SK-N-SH (cell line): ENCODE measurements at regions of chr6 and their contacts with region 1.

Region 1: GRCh38 chr6:40425192-40425919 is 161.8 kb downstream of the LRFN2 start:
- DNase-seq: peak; percentile 80
- H3K4me3 ChIP-seq: no peak overlapping the region
- H3K27ac ChIP-seq: peak overlapping the region in 1 of 2 experiments; percentile 99; a peak in 2 of 4 replicates
- H3K4me1 ChIP-seq: peaks cover 0 to 60% of the 10 kb centered on the region in 2 experiments; a peak in 2 of 4 replicates
- H3K27me3 ChIP-seq: no peaks in the 10 kb centered on the region
- CTCF ChIP-seq: no peak
- EP300 ChIP-seq: peak in 1 of 2 experiments; percentile 93; a peak in 2 of 4 replicates
- RAD21 ChIP-seq: peak; percentile 34

Region 2: GRCh38 chr6:40315060-40315459 is 110.3 kb before region 1 on chr6:
- CTCF ChIA-PET with region 1: no interaction called
- POLR2A ChIA-PET with region 1: no interaction called
- DNase-seq: no peak
- H3K4me3 ChIP-seq: no peak overlapping the region
- H3K27ac ChIP-seq: no peak overlapping the region
- H3K4me1 ChIP-seq: peaks cover 0 to 12% of the 10 kb centered on the region in 2 experiments; a peak in 1 of 4 replicates
- H3K27me3 ChIP-seq: no peaks in the 10 kb centered on the region
- CTCF ChIP-seq: no peak
- EP300 ChIP-seq: no peak
- RAD21 ChIP-seq: no peak

Region 3: DNA sequence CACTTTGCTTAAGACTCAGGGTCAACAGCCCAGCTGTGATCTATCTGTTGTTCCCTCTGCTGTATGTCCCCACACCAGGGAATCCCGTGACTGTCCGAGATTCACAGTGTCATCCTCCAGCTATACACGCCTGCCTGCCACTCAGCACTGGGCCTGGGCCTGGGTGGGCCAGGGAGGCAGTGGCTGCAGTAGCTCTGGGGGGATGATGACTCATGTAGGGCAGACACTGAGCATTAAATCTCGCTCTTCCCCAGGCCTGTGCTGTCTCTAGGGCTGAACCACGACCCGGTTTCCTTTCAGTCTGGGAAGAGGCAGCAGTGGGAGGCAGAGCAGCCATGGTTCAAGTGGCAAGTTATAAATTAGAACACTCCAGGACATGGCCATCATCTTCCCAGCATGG is 12.1 kb before region 1 on chr6:
- CTCF ChIA-PET with region 1: interaction called, 25 read pairs
- POLR2A ChIA-PET with region 1: interaction called, 11 read pairs
- DNase-seq: no peak
- H3K4me3 ChIP-seq: no peak overlapping the region
- H3K27ac ChIP-seq: peak overlapping the region in 1 of 2 experiments; percentile 100; a peak in 2 of 4 replicates
- H3K4me1 ChIP-seq: peaks cover 0 to 75% of the 10 kb centered on the region in 2 experiments; a peak in 3 of 4 replicates
- H3K27me3 ChIP-seq: no peaks in the 10 kb centered on the region
- CTCF ChIP-seq: no peak
- EP300 ChIP-seq: no peak
- RAD21 ChIP-seq: no peak

Region 4: DNA sequence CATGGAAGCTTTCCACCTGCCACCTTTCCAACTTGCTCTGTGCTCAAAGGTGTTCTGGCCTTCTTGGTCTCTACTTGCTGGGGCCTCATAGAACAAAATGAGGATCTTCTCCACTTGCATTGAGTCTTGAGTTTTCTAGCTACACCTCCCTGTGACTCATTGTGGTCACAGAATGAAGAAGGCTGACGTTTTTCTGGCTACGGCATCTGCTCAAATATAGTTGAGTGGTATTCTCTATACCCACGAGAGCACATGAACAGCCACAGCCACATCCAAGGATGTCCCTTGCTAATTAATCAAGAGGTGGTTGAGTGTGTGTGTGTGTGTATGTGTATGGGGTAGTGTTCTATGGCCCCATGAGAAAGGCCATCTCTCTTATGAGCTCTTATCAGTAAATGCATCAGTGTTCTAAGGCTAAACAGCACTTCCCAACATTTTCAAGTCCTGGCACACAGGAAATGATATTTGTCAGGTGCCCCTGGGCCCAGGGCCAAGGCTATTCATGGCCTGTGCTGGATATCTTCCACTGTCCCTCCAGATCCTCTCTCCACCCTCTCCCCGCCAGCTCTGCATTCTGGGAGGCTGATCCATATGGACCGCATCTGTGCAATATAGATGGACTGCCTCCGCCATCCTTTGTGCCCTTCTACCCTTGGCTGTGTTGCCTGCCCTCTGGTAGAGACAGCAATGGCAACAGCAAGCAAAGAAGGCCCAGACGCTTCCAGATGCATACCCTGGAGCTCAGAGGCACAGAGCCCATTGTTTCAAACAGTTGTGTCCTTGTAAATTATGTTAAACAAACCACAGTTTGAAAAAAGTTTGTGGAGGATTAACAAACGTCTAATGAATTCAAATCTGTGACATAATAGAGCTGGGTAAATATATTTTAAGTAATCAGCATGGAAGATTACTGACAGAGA is 11.6 kb after region 1 on chr6:
- CTCF ChIA-PET with region 1: interaction called, 13 read pairs
- POLR2A ChIA-PET with region 1: interaction called, 13 read pairs
- DNase-seq: peak; percentile 66
- H3K4me3 ChIP-seq: no peak overlapping the region
- H3K27ac ChIP-seq: peak overlapping the region in 1 of 2 experiments; percentile 94; a peak in 2 of 4 replicates
- H3K4me1 ChIP-seq: peaks cover 15 to 55% of the 10 kb centered on the region in 2 experiments; a peak in 3 of 4 replicates
- H3K27me3 ChIP-seq: no peaks in the 10 kb centered on the region
- CTCF ChIP-seq: no peak
- EP300 ChIP-seq: peak in 1 of 2 experiments; percentile 85; a peak in 2 of 4 replicates
- RAD21 ChIP-seq: peak; percentile 24